ENCODE measurements at regions of chr11 and their contacts with region 1.

Region 1: GRCh38 chr11:111777094-111778046 is 11.2 kb upstream of the PPP2R1B start:
- DNase-seq: peak; percentile 88
- H3K4me3 ChIP-seq: no peak overlapping the region
- H3K27ac ChIP-seq: peak overlapping the region; percentile 7
- H3K4me1 ChIP-seq: peaks cover 7% of the 10 kb centered on the region
- H3K27me3 ChIP-seq: no peaks in the 10 kb centered on the region
- CTCF ChIP-seq: peak; percentile 93

Region 2: GRCh38 chr11:111454561-111455192 is 322.7 kb before region 1 on chr11:
- CTCF ChIA-PET with region 1: interaction called, 6 read pairs
- POLR2A ChIA-PET with region 1: no interaction called
- intact Hi-C with region 1: loop called (anchors 1 kb)
- DNase-seq: peak; percentile 85
- H3K4me3 ChIP-seq: no peak overlapping the region
- H3K27ac ChIP-seq: no peak overlapping the region
- H3K4me1 ChIP-seq: peaks cover 10% of the 10 kb centered on the region
- H3K27me3 ChIP-seq: no peaks in the 10 kb centered on the region
- CTCF ChIP-seq: peak; percentile 59

Region 3: DNA sequence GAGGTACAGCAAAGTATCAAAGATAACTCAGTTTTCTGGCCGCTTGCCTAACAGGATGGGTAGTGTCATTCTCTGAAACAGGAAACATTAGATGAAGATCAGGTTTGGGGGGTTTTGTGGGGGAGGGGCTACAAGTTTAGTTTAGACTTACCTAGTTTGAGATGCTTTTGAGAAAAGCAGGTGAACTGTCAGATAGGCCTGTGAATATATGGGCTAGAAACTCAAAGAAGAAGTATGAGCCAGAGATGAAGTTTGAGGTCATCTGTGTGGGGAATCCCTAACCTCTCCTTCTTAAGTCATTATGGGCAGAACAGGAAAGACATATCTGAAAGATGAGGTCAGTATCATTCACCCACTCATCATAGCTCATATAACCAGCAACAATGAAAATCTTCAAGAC is 250.9 kb before region 1 on chr11:
- CTCF ChIA-PET with region 1: no interaction called
- POLR2A ChIA-PET with region 1: no interaction called
- intact Hi-C with region 1: no loop called
- DNase-seq: peak; percentile 27
- H3K4me3 ChIP-seq: no peak overlapping the region
- H3K27ac ChIP-seq: no peak overlapping the region
- H3K4me1 ChIP-seq: no peaks in the 10 kb centered on the region
- H3K27me3 ChIP-seq: no peaks in the 10 kb centered on the region
- CTCF ChIP-seq: no peak

Region 4: GRCh38 chr11:111586388-111586831 is 191.0 kb before region 1 on chr11:
- CTCF ChIA-PET with region 1: interaction called, 10 read pairs
- POLR2A ChIA-PET with region 1: no interaction called
- intact Hi-C with region 1: no loop called
- DNase-seq: peak; percentile 74
- H3K4me3 ChIP-seq: no peak overlapping the region
- H3K27ac ChIP-seq: no peak overlapping the region
- H3K4me1 ChIP-seq: no peaks in the 10 kb centered on the region
- H3K27me3 ChIP-seq: no peaks in the 10 kb centered on the region
- CTCF ChIP-seq: peak; percentile 80

Region 5: GRCh38 chr11:111601979-111602864 is 175.1 kb before region 1 on chr11 and contains the start of gene SIK2:
- CTCF ChIA-PET with region 1: interaction called, 17 read pairs
- POLR2A ChIA-PET with region 1: no interaction called
- intact Hi-C with region 1: loop called (anchors 1 kb)
- DNase-seq: peak; percentile 99
- H3K4me3 ChIP-seq: peak within 1 kb of the TSS; percentile 75
- H3K27ac ChIP-seq: peak within 1 kb of the TSS; percentile 93
- H3K4me1 ChIP-seq: peaks cover 39% of the 10 kb centered on the region
- H3K27me3 ChIP-seq: no peaks in the 10 kb centered on the region
- CTCF ChIP-seq: peak; percentile 91
- total RNA-seq, gene SIK2: 18.7 and 21.5 TPM in 2 replicates

Region 6: GRCh38 chr11:111766093-111766833 is 11.1 kb before region 1 on chr11 and contains the start of gene PPP2R1B:
- CTCF ChIA-PET with region 1: interaction called, 10 read pairs
- POLR2A ChIA-PET with region 1: interaction called, 5 read pairs
- intact Hi-C with region 1: no loop called
- DNase-seq: peak; percentile 89
- H3K4me3 ChIP-seq: peak within 1 kb of the TSS; percentile 89
- H3K27ac ChIP-seq: peak within 1 kb of the TSS; percentile 88
- H3K4me1 ChIP-seq: peaks cover 8% of the 10 kb centered on the region
- H3K27me3 ChIP-seq: no peaks in the 10 kb centered on the region
- CTCF ChIP-seq: no peak
- total RNA-seq, gene PPP2R1B: 72.2 and 80.0 TPM in 2 replicates